H1 (cell line): ENCODE measurements at regions of chr6 and their contacts with region 1.

Region 1: GRCh38 chr6:12637960-12638641 is 78.5 kb upstream of the PHACTR1 start:
- DNase-seq: peak; percentile 58 to 81
- H3K4me3 ChIP-seq: no peak overlapping the region
- H3K27ac ChIP-seq: no peak overlapping the region
- H3K4me1 ChIP-seq: no peaks in the 10 kb centered on the region
- H3K27me3 ChIP-seq: no peaks in the 10 kb centered on the region
- CTCF ChIP-seq: peak; percentile 72 to 93 (median 91)
- EP300 ChIP-seq: no peak
- POLR2A ChIP-seq: no peak
- RAD21 ChIP-seq: peak; percentile 96 to 97

Region 2: DNA sequence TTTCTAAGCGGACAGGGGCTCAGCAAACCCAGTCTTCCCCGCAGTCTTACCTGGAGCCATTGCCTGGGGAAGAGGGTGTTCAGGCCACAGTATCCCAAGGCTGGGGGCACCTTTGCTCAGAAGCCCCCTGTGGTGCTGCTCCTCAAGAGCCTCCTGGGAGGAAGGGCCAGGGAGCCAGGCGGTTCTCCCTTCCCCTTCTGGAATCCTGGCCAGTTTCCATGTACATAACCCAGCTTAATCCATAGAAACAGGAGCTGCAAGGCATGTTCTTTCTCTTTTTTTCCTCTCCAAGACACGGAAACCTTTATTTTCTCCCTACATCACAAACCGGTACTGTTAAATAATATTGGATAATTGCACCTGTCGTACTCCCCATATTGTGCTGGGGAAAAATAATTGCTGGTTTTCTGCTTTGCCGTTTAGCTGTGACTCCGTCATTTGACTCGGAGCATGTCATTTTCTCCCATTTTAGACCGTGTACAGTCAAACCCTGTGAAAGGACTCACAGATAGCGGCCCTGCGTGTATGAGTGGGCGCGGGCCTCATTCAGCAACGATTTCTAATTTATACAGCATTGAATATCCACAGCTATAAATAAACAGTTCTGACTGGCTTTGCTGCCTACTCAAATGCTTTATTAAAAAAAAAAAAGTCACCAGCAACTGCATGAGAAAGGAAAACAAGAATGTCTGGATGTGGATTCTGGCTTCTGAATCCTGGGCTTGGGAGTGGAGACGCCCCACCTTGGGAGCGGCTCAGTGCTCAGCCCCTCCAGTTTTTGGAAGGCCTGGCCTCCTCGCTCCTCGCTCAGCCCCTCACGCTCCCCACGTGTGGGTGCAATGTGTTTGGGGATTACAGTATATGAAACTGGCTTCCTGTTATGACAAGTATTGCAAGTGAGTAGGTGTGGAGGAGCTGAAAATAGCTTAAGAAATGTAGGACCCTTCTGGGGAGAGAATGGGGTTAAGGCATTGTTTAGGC is 926.8 kb before region 1 on chr6:
- CTCF ChIA-PET with region 1: no interaction called
- POLR2A ChIA-PET with region 1: no interaction called
- DNase-seq: no peak
- H3K4me3 ChIP-seq: no peak overlapping the region
- H3K27ac ChIP-seq: no peak overlapping the region
- H3K4me1 ChIP-seq: peaks cover 0 to 8% (median 0%) of the 10 kb centered on the region in 4 experiments; a peak in 2 of 7 replicates
- H3K27me3 ChIP-seq: no peaks in the 10 kb centered on the region
- CTCF ChIP-seq: no peak
- EP300 ChIP-seq: no peak
- POLR2A ChIP-seq: no peak
- RAD21 ChIP-seq: no peak

Region 3: GRCh38 chr6:12535586-12536314 is 102.4 kb before region 1 on chr6:
- CTCF ChIA-PET with region 1: no interaction called
- POLR2A ChIA-PET with region 1: no interaction called
- DNase-seq: no peak
- H3K4me3 ChIP-seq: no peak overlapping the region
- H3K27ac ChIP-seq: no peak overlapping the region
- H3K4me1 ChIP-seq: no peaks in the 10 kb centered on the region
- H3K27me3 ChIP-seq: no peaks in the 10 kb centered on the region
- CTCF ChIP-seq: no peak
- EP300 ChIP-seq: no peak
- POLR2A ChIP-seq: no peak
- RAD21 ChIP-seq: no peak

Region 4: GRCh38 chr6:12545619-12546409 is 92.3 kb before region 1 on chr6:
- CTCF ChIA-PET with region 1: no interaction called
- POLR2A ChIA-PET with region 1: no interaction called
- DNase-seq: no peak
- H3K4me3 ChIP-seq: no peak overlapping the region
- H3K27ac ChIP-seq: no peak overlapping the region
- H3K4me1 ChIP-seq: no peaks in the 10 kb centered on the region
- H3K27me3 ChIP-seq: no peaks in the 10 kb centered on the region
- CTCF ChIP-seq: no peak
- EP300 ChIP-seq: no peak
- POLR2A ChIP-seq: no peak
- RAD21 ChIP-seq: no peak

Region 5: DNA sequence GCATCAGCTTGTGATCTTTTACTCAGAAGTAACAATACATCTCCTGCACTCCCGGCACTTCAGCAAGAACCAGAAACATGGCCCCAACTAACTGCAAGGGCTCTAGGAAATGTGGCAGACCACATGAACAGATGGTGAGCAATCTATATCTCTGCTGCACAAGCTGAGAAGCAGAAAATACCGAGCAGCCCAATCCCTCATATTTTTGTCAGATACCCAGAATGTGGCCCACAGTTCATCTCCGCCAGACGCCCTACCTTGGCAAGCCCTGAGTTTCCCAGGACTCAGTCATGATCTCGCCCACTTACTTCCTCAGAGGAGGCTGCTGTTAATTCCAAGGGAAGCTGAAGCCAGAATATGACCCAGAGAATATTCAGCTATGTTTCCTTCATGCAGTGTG is 15.4 kb after region 1 on chr6:
- CTCF ChIA-PET with region 1: interaction called, 11 read pairs
- POLR2A ChIA-PET with region 1: no interaction called
- DNase-seq: no peak
- H3K4me3 ChIP-seq: no peak overlapping the region
- H3K27ac ChIP-seq: no peak overlapping the region
- H3K4me1 ChIP-seq: peaks cover 0 to 6% (median 0%) of the 10 kb centered on the region in 4 experiments; a peak in 2 of 7 replicates
- H3K27me3 ChIP-seq: peaks cover 0 to 7% (median under 1%) of the 10 kb centered on the region in 4 experiments; a peak in 4 of 7 replicates
- CTCF ChIP-seq: no peak
- EP300 ChIP-seq: no peak
- POLR2A ChIP-seq: no peak
- RAD21 ChIP-seq: no peak

Region 6: DNA sequence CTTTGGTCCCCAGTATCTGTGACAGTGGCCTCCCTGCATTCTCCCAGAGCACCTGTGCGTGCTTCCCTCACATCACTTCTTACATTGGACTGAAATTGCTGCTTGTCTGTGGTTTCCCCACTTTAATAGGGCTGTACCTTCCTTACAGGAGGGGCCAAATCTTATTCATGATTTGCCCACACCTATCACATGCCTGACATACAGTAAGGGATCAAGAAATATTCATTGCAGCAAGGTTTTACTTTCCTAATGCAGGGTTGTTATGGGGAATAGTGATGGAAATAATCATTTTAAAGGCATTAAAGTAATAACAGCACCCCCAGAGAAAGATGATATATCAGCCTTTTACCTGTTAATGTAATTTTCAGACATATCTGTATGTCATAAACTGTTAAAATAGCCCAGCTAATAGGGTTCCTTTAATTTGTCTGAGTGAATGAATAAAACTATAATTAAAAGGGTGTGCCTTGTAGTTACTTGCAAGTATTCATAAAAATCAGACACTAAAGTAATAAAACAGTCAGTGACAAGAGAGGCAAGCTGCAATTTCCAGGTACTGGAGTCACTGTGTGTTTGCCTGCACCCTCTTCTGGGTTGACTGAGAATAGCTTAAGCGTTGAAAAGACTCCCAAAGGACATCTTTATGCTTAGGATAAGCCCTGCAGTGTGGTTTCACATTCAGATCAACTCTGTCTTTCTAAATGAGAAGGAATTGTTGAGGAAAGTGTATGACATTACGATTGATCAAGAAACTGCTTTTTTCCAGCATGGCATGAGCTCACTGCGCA is 261.1 kb after region 1 on chr6:
- CTCF ChIA-PET with region 1: interaction called, 58 read pairs
- POLR2A ChIA-PET with region 1: no interaction called
- DNase-seq: no peak
- H3K4me3 ChIP-seq: no peak overlapping the region
- H3K27ac ChIP-seq: no peak overlapping the region
- H3K4me1 ChIP-seq: peaks cover 0 to 4% (median 0%) of the 10 kb centered on the region in 4 experiments; a peak in 2 of 7 replicates
- H3K27me3 ChIP-seq: no peaks in the 10 kb centered on the region
- CTCF ChIP-seq: peak in 2 of 3 experiments; percentile 18 to 27; a peak in 3 of 4 replicates
- EP300 ChIP-seq: no peak
- POLR2A ChIP-seq: no peak
- RAD21 ChIP-seq: peak in 1 of 2 experiments; percentile 41; a peak in 2 of 4 replicates